Endothelial cell of umbilical vein (primary cell): ENCODE measurements at regions of chr4 and their contacts with region 1.

Region 1: DNA sequence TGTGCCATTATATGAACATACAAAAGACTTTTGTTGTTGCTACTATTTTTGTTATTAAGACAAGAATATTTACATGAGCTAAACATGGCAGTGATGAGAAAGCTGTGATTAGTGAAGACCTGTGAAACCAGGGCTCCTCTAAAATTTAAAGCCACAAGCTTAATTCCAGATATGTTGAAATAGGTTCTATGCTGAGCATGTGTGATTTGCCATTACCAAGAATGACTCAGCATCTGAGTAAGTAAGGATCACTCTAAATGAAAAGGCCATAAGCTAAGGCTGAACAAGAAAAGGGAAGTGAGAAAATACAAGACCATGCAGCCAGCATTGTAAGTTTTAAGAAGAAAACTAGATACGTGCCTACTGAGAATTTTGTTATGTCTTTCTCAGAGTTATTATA is 75.9 kb upstream of the CAMK2D start:
- DNase-seq: peak; percentile 51
- H3K4me3 ChIP-seq: no peak overlapping the region
- H3K27ac ChIP-seq: no peak overlapping the region
- H3K4me1 ChIP-seq: peaks cover 20% of the 10 kb centered on the region
- H3K27me3 ChIP-seq: no peaks in the 10 kb centered on the region
- CTCF ChIP-seq: no peak
- POLR2A ChIP-seq: no peak

Region 2: GRCh38 chr4:113435893-113436292 is 401.5 kb before region 1 on chr4:
- CTCF ChIA-PET with region 1: no interaction called
- POLR2A ChIA-PET with region 1: no interaction called
- dilution Hi-C with region 1: no loop called
- intact Hi-C with region 1: no loop called
- DNase-seq: peak; percentile 94
- H3K4me3 ChIP-seq: peak overlapping the region in 1 of 3 experiments; percentile 44
- H3K27ac ChIP-seq: peak overlapping the region; percentile 78
- H3K4me1 ChIP-seq: peaks cover 22% of the 10 kb centered on the region
- H3K27me3 ChIP-seq: no peaks in the 10 kb centered on the region
- CTCF ChIP-seq: no peak
- POLR2A ChIP-seq: no peak

Region 3: GRCh38 chr4:113692809-113693411 is 144.5 kb before region 1 on chr4:
- CTCF ChIA-PET with region 1: no interaction called
- POLR2A ChIA-PET with region 1: no interaction called
- dilution Hi-C with region 1: no loop called
- intact Hi-C with region 1: no loop called
- DNase-seq: no peak
- H3K4me3 ChIP-seq: no peak overlapping the region
- H3K27ac ChIP-seq: no peak overlapping the region
- H3K4me1 ChIP-seq: no peaks in the 10 kb centered on the region
- H3K27me3 ChIP-seq: no peaks in the 10 kb centered on the region
- CTCF ChIP-seq: no peak
- POLR2A ChIP-seq: no peak

Region 4: DNA sequence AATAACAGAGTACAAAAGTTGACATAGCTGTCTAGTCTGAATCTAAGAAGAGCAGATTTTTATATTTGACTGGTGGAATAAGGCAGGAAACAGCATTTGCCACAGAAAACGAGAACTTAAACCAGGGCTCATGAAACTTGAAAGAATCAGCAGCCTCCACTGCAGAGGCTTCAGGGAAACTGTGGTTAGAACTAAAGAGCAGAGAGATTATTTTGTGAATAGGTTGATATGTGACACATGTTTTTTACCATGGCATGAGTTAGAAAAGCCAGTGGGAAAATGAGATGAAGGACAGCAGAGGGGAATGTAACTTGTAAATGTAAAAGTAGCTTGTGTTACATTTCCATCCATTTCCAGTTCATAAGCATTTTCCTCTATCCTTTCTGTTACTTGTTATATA is 12.1 kb before region 1 on chr4:
- CTCF ChIA-PET with region 1: interaction called, 13 read pairs
- POLR2A ChIA-PET with region 1: no interaction called
- dilution Hi-C with region 1: no loop called
- intact Hi-C with region 1: no loop called
- DNase-seq: no peak
- H3K4me3 ChIP-seq: no peak overlapping the region
- H3K27ac ChIP-seq: no peak overlapping the region
- H3K4me1 ChIP-seq: no peaks in the 10 kb centered on the region
- H3K27me3 ChIP-seq: no peaks in the 10 kb centered on the region
- CTCF ChIP-seq: no peak
- POLR2A ChIP-seq: no peak

Region 5: DNA sequence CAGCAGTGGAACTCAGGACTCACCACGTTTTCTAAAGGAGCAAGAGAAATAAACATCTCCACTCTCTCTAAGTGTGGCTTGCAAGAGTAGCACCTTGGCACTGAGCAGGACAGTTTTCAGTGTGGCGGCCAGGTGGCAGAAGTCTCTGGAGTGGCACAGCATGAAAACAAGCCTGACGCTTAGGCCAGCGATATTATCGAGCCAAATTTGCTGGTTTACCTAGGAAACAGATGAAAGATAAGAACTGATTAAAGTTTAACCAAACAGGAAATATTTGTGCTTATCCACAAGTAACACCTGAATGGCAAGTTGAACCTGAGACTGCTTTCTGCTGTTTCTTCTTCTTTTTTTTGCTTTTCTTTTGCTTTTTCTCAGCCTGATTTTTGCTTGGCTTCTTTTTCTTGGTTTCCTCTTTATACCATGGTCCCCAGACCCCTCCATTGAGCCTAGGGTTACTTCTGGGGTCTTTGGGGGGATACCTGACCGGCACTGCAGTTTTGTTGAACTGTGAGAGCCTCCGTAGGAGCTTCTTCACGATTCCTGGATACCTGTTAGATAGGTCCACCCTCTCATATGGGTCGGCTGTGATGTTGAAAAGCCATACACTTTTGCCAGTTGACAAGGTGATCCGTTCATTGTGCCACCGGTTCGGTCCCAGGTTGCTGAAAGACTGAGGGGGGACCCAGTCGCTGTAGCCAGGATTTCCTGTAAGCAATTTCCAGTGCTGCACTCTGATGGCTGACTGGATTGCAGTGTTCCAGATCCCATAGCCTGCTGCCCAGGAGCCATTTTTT is 64.8 kb after region 1 on chr4:
- CTCF ChIA-PET with region 1: no interaction called
- POLR2A ChIA-PET with region 1: no interaction called
- dilution Hi-C with region 1: no loop called
- intact Hi-C with region 1: no loop called
- DNase-seq: peak; percentile 26
- H3K4me3 ChIP-seq: no peak overlapping the region
- H3K27ac ChIP-seq: no peak overlapping the region
- H3K4me1 ChIP-seq: no peaks in the 10 kb centered on the region
- H3K27me3 ChIP-seq: no peaks in the 10 kb centered on the region
- CTCF ChIP-seq: no peak
- POLR2A ChIP-seq: no peak

Region 6: DNA sequence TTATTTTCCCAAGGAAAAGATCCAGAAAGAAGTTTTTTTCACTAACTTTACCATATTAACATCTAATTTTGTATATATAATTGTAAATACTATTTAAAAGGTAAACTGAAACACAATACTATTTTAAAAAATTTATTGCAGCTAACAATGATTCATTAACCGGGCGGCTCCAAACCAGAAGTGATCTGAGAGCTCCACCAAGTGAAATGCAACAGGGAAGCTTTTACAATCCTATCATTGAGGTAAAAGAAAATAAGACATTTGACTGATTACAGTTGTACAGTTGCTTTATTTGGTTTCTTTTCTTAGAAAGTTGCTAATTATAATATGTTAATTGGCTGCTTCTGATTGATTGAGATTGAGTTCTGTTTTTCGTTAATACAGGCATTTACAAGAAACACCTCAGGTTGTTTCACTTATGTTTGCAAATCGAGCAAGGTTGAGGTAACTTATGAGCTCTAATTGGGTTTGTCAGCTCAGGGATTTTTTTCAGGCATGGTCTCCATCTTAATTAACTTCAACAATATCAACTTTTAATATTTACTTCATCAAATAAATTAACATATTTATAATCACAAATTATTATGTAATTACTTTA is 541.0 kb after region 1 on chr4:
- CTCF ChIA-PET with region 1: interaction called, 10 read pairs
- POLR2A ChIA-PET with region 1: no interaction called
- dilution Hi-C with region 1: no loop called
- intact Hi-C with region 1: no loop called
- DNase-seq: peak; percentile 37
- H3K4me3 ChIP-seq: no peak overlapping the region
- H3K27ac ChIP-seq: no peak overlapping the region
- H3K4me1 ChIP-seq: no peaks in the 10 kb centered on the region
- H3K27me3 ChIP-seq: peaks cover 0 to 2% of the 10 kb centered on the region in 2 experiments
- CTCF ChIP-seq: peak in 1 of 2 donors; percentile 21
- POLR2A ChIP-seq: no peak